Right ventricle myocardium superior (tissue), 1 donor: ENCODE measurements at regions of chr1 and their contacts with region 1.

Region 1: GRCh38 chr1:46527474-46528296 is 23.8 kb downstream of the KNCN start:
- DNase-seq: peak; percentile 89
- ATAC-seq: peak; percentile 88

Region 2: DNA sequence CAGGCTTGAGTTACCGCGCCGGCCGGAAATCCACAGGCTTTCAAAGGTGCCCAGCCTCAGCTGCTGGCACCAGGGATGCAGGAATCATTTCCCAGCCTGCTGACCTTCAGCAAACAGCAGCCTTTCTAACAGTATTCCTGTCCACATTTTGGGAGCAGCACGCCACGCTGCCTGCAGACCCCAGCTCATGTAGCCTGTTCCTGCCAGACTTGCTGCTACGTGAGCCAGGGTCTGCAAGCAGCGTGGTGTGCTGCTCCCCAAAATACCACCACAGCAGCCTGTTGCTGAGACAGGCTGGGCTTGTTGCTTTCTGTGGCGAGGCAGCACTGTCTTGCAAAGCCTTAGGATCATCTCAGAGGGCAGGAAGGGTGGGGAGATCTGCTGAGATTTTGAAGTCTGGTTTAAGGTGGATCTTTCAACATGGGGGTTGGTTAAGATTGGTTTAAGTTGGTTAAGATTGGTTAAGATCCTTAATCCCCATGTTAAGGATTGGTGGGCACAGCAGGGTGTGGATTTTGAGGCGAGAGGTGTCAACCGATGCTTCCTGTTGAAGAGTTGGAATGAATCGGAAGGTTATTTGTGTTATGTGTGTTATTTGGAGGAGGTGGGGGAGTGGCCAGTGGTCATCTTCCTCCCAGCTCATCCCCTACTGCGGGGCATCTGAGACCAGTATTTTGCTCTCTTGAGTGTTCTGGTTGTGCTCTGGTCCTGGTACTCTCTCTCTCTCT is 120.6 kb before region 1 on chr1:
- intact Hi-C with region 1: loop called (anchors 5 kb)
- DNase-seq: no peak
- ATAC-seq: no peak

Region 3: DNA sequence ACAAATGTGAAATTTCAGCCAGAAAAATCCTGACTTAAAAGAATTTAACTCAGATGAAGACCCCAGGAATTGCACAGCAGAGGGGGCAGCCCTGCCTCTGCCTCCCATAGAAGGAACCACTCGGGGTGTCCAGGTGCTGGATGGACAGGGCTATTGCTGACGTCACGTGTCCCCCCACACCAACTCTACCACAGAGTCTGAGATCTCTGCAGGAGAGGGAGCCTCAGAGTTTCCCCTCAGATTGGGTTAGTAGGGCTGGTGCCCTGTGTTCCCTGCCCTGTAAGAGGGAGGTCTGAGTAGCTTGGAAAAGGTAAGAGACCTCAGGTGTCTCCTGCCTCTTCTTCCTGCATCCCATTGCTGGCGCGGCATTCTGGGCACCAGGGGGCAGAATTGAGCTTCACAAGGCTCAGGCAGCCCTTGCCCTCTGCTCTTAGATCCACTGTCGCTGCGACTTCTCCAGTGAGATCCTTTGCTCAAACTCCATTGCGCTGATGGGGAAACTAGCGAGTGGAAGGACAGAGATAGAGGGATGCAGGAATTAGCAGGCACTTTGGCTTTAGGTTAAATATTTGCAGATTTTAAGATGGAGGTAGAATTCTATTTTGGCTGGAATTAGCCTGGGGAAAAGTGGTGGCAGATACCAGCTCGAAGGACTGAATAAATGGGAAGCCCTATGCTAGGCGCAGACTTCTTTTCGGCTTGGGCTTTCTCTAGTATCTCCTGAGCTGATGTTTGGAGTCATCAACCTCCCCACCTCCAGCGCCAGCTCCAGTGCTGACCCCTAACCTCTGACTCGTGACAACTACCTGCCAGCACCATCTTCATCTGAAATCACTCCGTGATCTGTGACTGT is 80.8 kb before region 1 on chr1:
- intact Hi-C with region 1: loop called (anchors 5 kb)
- DNase-seq: peak; percentile 89
- ATAC-seq: peak; percentile 79

Region 4: GRCh38 chr1:46724991-46725735 is 197.5 kb after region 1 on chr1:
- intact Hi-C with region 1: loop called (anchors 10 kb)
- DNase-seq: peak; percentile 68
- ATAC-seq: peak; percentile 97